Ascending aorta (tissue), 2 donors: ENCODE measurements at regions of chr12 and their contacts with region 1.

Region 1: DNA sequence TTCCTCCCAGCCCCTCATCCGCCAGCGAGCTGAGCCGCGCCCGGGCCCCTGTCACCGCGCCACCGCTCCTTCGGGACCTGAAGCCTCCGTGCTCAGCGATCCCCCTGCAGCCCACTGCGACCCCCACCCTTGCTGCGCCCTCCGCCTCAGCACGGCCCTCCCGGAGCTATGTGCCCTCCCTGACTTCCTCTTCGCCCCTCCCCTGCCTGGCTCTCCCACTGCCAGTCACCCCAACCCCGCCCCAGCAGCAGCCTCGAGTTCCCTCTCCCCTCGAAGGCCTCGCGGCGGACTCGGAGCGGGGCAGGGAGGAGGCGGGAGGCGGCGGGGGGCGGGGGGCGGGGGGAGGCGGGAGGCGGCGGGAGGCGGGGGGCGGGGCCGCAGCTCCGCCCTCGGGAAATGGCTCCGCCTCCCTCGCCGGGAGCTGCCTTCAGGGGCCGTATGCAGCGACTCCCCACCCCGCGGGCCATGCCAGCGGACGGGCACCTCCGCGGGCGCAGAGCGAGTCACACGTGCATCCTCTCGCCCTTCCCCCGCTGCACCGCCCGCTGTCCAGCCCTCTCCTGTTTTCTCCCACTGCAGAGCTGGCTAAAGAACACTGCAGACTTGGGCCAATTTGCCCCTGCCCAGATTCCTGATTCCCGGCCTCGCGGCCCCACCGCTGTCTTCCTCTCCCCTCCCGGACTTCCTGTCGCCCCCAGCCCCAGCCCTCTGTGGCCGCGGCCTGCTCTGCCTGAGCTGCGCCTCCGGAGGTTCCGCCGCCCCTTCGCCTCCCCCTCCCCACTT is 29.1 kb upstream of the ADIPOR2 start:
- DNase-seq: peak; percentile 88 to 97
- H3K4me3 ChIP-seq: peak overlapping the region; percentile 39 to 73
- H3K27ac ChIP-seq: peak overlapping the region; percentile 85 to 96
- H3K4me1 ChIP-seq: peaks cover 0 to 2% of the 10 kb centered on the region in 2 donors
- H3K27me3 ChIP-seq: no peaks in the 10 kb centered on the region
- CTCF ChIP-seq: no peak

Region 2: GRCh38 chr12:1680804-1681492 is 19.2 kb after region 1 on chr12:
- intact Hi-C with region 1: loop called (anchors 2 kb)
- DNase-seq: no peak
- H3K4me3 ChIP-seq: no peak overlapping the region
- H3K27ac ChIP-seq: peak overlapping the region; percentile 69 to 71
- H3K4me1 ChIP-seq: peaks cover 0 to 21% of the 10 kb centered on the region in 2 donors
- H3K27me3 ChIP-seq: no peaks in the 10 kb centered on the region
- CTCF ChIP-seq: no peak

Region 3: GRCh38 chr12:1690578-1691122 is 28.9 kb after region 1 on chr12 and contains the start of gene ADIPOR2:
- intact Hi-C with region 1: loop called (anchors 1 kb)
- DNase-seq: peak; percentile 79 to 98
- H3K4me3 ChIP-seq: peak within 1 kb of the TSS; percentile 86 to 95
- H3K27ac ChIP-seq: peak within 1 kb of the TSS; percentile 88 to 95
- H3K4me1 ChIP-seq: peaks cover 0 to 10% of the 10 kb centered on the region in 2 donors
- H3K27me3 ChIP-seq: no peaks in the 10 kb centered on the region
- CTCF ChIP-seq: no peak
- total RNA-seq, gene ADIPOR2: 25.7 TPM